Right cardiac atrium (tissue), 5 donors: ENCODE measurements at regions of chr16 and their contacts with region 1.

Region 1: GRCh38 chr16:48164907-48165726 is 9.3 kb upstream of the ABCC12 start:
- DNase-seq: peak; percentile 67 to 89 (median 82)
- ATAC-seq: peak; percentile 95
- H3K4me3 ChIP-seq: no peak overlapping the region
- H3K27ac ChIP-seq: no peak overlapping the region
- H3K4me1 ChIP-seq: peaks cover 2% of the 10 kb centered on the region
- H3K27me3 ChIP-seq: no peaks in the 10 kb centered on the region

Region 2: GRCh38 chr16:47037746-47038458 is 1127.2 kb before region 1 on chr16:
- intact Hi-C with region 1: loop called in 2 of 4 experiments (anchors 10 kb)
- DNase-seq: peak; percentile 90 to 96 (median 96)
- ATAC-seq: peak; percentile 98 to 99
- H3K4me3 ChIP-seq: peak overlapping the region; percentile 88
- H3K27ac ChIP-seq: no peak overlapping the region
- H3K4me1 ChIP-seq: no peaks in the 10 kb centered on the region
- H3K27me3 ChIP-seq: no peaks in the 10 kb centered on the region

Region 3: DNA sequence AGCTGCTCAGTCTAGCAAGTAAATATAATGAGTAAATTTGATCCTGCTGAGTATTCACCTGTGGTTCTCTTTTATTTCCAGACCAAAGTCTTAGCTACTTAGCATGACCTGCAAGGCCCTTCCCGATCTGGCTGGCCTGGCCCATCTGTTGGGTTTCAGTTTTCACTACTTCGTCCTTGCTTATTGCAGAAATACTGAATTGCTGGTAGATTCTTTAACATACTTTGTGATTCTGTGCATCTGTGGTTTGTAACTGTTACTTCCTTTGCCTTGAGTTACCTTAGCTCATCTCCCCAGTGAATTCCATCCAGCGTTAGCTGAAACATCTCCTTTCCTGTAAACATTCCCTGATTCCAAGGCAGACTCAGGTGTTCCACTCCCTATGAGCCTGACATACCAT is 572.9 kb before region 1 on chr16:
- intact Hi-C with region 1: no loop called
- DNase-seq: no peak
- ATAC-seq: no peak
- H3K4me3 ChIP-seq: no peak overlapping the region
- H3K27ac ChIP-seq: no peak overlapping the region
- H3K4me1 ChIP-seq: no peaks in the 10 kb centered on the region
- H3K27me3 ChIP-seq: no peaks in the 10 kb centered on the region

Region 4: DNA sequence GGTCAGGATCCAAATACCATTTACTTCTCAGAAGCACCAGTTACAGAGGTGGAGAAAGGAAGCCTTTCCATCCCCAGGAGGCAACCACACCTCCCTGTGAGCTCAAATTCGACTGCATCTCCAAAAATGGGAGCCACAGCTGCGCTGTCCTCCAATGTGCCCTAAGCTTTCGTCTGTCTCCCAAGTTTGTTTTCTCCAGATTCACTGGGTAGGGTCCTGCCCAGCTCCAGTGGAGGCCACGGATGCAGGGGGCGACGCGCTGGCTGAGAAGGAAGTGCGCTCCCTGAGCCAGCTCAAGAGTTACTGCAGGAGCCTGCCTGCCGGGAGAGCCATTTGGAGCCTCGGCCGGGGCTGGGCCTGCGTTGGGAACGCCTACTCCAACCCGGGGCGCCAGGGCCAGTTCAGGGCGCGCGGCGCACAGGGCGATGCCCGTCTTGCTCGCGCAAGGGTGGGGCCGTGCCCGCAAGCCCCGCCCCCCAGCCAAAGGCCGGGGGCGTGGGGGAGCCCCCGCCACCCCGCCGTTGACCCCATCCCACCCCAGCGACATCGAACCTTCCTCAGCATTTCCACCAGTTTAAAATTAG is 200.6 kb after region 1 on chr16:
- intact Hi-C with region 1: no loop called
- DNase-seq: peak; percentile 94 to 97 (median 96)
- ATAC-seq: peak; percentile 99 to 100
- H3K4me3 ChIP-seq: peak overlapping the region; percentile 90
- H3K27ac ChIP-seq: peak overlapping the region; percentile 84
- H3K4me1 ChIP-seq: peaks cover 11% of the 10 kb centered on the region
- H3K27me3 ChIP-seq: no peaks in the 10 kb centered on the region